ENCODE measurements at regions of chr11 and their contacts with region 1.

Region 1: DNA sequence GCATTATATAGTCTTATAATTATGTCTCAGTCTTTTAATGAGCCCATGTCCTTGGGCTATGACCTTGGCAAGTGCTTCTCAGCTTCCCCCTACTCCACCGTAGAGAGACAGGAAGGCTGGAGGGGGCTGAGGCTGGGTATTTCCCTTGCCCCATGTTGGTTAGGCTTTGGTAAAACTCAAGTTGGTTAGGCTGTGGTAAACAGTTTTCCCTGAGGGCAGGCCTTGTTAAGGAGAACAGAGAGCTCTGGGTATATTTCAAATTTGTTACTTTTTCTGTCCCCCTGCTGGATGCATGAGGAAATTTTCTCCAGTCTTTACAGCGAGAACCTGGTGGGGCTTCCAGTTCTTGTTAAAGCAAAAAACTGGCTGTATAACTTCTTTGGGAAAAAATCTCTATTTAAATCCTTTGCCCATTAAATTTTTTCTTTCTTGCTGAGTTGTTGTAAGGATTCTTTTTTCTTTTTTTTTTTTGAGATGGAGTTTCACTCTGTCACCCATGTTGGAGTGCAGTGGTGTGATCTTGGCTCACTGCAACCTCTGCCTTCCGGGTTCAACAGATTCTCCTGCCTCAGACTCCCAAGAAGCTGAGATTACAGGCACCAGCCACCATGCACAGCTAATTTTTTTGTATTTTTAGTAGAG is 12.2 kb upstream of the DCHS1 start:
- DNase-seq: peak; percentile 55
- H3K4me3 Mint-ChIP-seq: peak overlapping the region; percentile 23
- H3K27ac Mint-ChIP-seq: peak overlapping the region; percentile 41
- H3K4me1 Mint-ChIP-seq: peaks cover 62% of the 10 kb centered on the region
- H3K27me3 Mint-ChIP-seq: peaks cover 12% of the 10 kb centered on the region

Region 2: GRCh38 chr11:6531267-6531752 is 136.5 kb before region 1 on chr11:
- intact Hi-C with region 1: loop called (anchors 2 kb)
- DNase-seq: peak; percentile 16
- H3K4me3 Mint-ChIP-seq: no peak overlapping the region
- H3K27ac Mint-ChIP-seq: no peak overlapping the region
- H3K4me1 Mint-ChIP-seq: peaks cover 12% of the 10 kb centered on the region
- H3K27me3 Mint-ChIP-seq: no peaks in the 10 kb centered on the region

Region 3: GRCh38 chr11:6619004-6619745 is 48.7 kb before region 1 on chr11 and contains the start of gene TPP1:
- intact Hi-C with region 1: loop called (anchors 2 kb)
- DNase-seq: peak; percentile 89
- H3K4me3 Mint-ChIP-seq: no peak within 1 kb of the TSS
- H3K27ac Mint-ChIP-seq: no peak within 1 kb of the TSS
- H3K4me1 Mint-ChIP-seq: no peaks in the 10 kb centered on the region
- H3K27me3 Mint-ChIP-seq: no peaks in the 10 kb centered on the region
- total RNA-seq, gene TPP1: 38.4 and 40.3 TPM in 2 replicates

Region 4: DNA sequence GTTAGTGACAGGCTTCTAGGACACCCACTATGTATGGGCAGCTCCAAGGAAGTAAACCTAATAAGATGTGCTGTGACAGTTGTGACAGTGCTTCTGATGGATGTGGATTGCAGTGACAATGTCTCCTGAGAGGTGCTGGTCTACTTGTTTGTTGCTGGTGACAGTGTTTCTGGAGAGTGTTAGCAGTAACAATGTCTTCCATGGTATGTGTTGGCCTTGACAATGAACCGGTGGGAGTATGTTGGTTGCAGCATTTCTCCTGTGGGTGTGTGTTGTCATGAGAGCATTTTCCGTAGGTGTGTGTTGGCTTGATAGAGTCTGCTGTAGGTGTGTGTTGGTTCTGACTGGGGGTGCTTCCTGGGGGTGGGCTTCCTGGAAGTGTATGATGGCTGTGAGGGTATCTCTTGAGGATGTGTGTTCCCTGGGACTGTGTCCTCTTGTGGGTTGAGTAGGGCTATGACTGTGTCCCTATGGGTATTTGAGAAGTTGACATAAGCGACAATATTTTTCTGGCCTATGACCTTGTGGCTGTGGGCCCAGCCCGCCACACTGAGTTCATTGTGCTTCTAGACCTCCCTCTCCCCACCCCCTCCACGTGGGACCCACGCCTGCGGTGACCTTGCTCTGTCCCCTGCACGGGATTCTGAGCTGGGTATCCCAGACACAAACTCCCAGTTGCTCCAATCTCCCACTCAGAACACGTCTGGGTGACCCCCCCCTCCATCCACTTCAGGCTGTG is 13.4 kb before region 1 on chr11:
- intact Hi-C with region 1: loop called (anchors 2 kb)
- DNase-seq: no peak
- H3K4me3 Mint-ChIP-seq: no peak overlapping the region
- H3K27ac Mint-ChIP-seq: no peak overlapping the region
- H3K4me1 Mint-ChIP-seq: no peaks in the 10 kb centered on the region
- H3K27me3 Mint-ChIP-seq: peaks cover 16% of the 10 kb centered on the region

Region 5: DNA sequence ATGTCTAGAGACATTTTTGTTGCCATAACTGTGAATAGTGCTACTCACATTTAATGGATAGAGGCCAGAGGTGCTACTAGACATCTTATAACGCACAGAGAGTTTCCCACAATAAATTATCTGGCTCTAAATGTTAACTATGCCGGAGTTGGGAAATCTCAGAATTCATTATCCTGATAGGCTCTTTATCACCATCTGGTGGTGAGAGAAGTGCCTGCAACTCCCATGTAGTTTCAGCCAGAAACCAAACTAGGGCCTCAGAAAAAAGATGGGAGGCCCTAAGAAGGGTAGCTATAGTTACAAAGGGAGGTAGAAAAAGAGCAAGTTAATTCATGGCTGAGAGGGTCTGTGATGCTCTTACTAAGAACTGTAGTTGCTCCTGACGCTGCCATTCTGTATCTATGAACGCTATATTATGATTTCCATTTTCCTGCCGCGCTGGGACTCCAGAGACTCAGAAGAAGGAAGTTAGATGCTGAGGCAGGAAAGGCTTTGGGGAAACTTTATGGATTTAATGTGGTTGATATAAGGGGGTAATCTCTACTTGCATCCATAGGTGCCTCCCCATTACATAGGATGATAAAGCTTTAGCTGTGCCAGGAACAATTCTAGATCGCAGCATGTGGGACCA is 38.2 kb after region 1 on chr11:
- intact Hi-C with region 1: no loop called
- DNase-seq: peak; percentile 19
- H3K4me3 Mint-ChIP-seq: no peak overlapping the region
- H3K27ac Mint-ChIP-seq: no peak overlapping the region
- H3K4me1 Mint-ChIP-seq: peaks cover 7% of the 10 kb centered on the region
- H3K27me3 Mint-ChIP-seq: no peaks in the 10 kb centered on the region

Region 6: DNA sequence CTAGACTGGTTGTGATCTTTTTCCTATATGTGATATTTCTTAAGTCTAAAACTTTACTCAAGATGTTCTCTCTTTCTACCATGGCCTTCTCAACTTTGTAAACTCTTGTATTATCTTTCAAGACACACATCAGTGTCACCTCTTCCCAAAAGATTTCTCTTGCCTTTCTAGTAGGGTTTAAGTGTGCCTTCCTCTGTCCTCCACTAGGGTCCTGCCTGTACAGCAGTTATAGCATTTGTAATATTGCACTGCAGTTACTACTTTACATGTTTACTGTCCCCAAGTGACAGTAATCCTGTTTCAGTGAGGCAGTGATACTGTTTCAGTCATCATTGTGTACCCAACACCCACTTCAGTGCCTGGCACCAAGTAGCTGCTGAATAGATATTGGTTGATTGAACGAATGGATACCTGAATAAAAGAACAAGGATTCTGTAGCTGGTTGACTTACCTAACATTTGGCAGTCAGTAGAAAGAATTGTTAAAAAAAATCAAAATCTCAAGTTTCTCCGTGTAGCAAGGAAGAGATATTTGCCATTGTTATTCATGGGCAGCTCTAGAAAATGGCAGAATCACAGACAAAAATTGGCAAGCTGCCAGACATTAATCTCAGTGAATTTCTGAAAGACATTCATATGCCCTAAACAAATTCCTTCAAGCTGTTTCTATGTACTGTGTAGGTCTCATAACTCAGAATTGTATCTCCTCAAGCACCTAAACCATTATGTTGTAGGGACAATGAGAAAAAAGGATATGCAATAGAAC is 500.3 kb after region 1 on chr11:
- intact Hi-C with region 1: no loop called
- DNase-seq: no peak
- H3K4me3 Mint-ChIP-seq: no peak overlapping the region
- H3K27ac Mint-ChIP-seq: no peak overlapping the region
- H3K4me1 Mint-ChIP-seq: no peaks in the 10 kb centered on the region
- H3K27me3 Mint-ChIP-seq: no peaks in the 10 kb centered on the region